Panc1 (cell line): ENCODE measurements at regions of chr20 and their contacts with region 1.

Region 1: DNA sequence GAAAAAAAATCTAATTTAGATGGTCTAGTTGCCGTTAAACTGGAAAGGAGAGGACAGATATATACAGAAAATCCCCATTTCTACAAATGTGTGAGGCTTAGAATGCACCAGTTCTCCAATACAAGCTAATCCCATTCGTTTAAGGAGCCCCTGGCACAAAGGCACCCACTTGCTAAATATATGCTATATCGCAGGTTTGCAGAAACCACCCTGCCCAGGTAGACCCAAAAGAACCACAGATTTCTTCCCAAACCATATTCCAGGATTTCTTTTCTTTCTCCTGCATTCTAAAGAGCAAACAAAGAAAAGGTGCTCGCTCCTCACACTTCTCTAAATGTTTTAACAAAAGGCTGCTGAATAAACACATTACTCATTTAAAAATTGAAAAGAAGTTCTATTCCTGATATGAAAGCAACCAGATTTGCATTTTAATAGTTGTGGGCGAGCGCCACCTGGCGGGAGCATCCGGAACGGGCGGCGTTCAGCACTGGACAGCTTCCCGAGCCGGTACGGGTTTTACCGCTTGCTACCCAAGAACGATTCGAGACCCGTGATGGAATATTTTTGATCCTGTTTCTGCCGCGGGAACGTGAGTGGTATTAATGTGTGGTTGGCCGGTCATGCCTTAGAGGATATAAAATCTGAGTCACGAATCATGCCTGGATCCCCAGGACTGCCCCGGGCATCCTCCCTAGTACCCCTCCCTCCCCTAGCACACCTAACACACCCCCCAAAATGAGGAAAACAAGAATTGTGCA is 2.1 kb downstream of the PTPRT start:
- DNase-seq: peak; percentile 25
- ATAC-seq: peak; percentile 73
- H3K4me3 ChIP-seq: peak overlapping the region in 1 of 2 experiments; percentile 23; a peak in 1 of 4 replicates
- H3K27ac ChIP-seq: no peak overlapping the region
- H3K4me1 ChIP-seq: no peaks in the 10 kb centered on the region
- H3K27me3 ChIP-seq: peaks cover 31% of the 10 kb centered on the region
- CTCF ChIP-seq: peak; percentile 95

Region 2: DNA sequence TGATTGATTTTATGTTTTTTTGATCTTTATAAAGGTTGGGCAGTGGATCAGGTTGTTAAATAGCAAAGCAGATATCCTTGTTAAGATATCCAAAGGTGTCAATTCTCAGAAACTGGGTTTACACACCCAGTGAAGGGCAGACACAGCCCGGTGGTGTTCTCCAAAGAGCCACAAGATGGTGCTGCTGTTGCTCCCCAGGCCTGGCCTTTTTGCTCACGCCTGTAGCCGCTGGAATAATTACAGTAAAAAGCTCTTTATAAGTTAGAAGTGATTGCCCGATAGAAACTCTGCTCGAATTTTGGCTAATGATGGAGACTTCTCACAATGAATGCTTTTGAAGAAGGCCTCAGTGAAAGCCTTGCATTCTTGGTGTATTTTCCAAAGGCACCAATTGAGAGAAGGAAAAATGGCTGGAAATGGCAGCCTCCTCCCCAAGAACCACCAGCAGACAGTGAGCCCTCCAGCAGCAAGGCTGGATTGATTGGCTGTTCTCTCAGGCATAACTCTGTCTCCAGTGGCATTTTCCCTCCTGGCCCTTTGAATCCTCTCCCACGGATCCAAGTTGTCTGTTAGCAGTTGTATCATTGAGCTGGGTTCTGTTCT is 1449.0 kb before region 1 on chr20:
- CTCF ChIA-PET with region 1: no interaction called
- POLR2A ChIA-PET with region 1: no interaction called
- in situ Hi-C with region 1: no loop called
- intact Hi-C with region 1: loop called (anchors 5 kb)
- DNase-seq: peak; percentile 38
- ATAC-seq: peak; percentile 92
- H3K4me3 ChIP-seq: no peak overlapping the region
- H3K27ac ChIP-seq: no peak overlapping the region
- H3K4me1 ChIP-seq: no peaks in the 10 kb centered on the region
- H3K27me3 ChIP-seq: no peaks in the 10 kb centered on the region; the same call in 1 of the 2 replicates
- CTCF ChIP-seq: peak; percentile 94

Region 3: GRCh38 chr20:42530822-42531448 is 656.7 kb before region 1 on chr20:
- CTCF ChIA-PET with region 1: no interaction called
- POLR2A ChIA-PET with region 1: no interaction called
- in situ Hi-C with region 1: no loop called
- intact Hi-C with region 1: loop called (anchors 5 kb)
- DNase-seq: peak; percentile 25
- ATAC-seq: no peak
- H3K4me3 ChIP-seq: no peak overlapping the region
- H3K27ac ChIP-seq: no peak overlapping the region
- H3K4me1 ChIP-seq: no peaks in the 10 kb centered on the region
- H3K27me3 ChIP-seq: peaks cover 2% of the 10 kb centered on the region; the same call in 1 of the 2 replicates
- CTCF ChIP-seq: peak; percentile 74

Region 4: GRCh38 chr20:43408848-43409576 is 221.4 kb after region 1 on chr20:
- CTCF ChIA-PET with region 1: no interaction called
- POLR2A ChIA-PET with region 1: no interaction called
- in situ Hi-C with region 1: no loop called
- intact Hi-C with region 1: loop called (anchors 5 kb)
- DNase-seq: peak; percentile 32
- ATAC-seq: peak; percentile 92
- H3K4me3 ChIP-seq: no peak overlapping the region
- H3K27ac ChIP-seq: no peak overlapping the region
- H3K4me1 ChIP-seq: no peaks in the 10 kb centered on the region
- H3K27me3 ChIP-seq: peaks cover 10% of the 10 kb centered on the region; the same call in 1 of the 2 replicates
- CTCF ChIP-seq: peak; percentile 84